ENCODE measurements at regions of chr4 and their contacts with region 1.

Region 1: DNA sequence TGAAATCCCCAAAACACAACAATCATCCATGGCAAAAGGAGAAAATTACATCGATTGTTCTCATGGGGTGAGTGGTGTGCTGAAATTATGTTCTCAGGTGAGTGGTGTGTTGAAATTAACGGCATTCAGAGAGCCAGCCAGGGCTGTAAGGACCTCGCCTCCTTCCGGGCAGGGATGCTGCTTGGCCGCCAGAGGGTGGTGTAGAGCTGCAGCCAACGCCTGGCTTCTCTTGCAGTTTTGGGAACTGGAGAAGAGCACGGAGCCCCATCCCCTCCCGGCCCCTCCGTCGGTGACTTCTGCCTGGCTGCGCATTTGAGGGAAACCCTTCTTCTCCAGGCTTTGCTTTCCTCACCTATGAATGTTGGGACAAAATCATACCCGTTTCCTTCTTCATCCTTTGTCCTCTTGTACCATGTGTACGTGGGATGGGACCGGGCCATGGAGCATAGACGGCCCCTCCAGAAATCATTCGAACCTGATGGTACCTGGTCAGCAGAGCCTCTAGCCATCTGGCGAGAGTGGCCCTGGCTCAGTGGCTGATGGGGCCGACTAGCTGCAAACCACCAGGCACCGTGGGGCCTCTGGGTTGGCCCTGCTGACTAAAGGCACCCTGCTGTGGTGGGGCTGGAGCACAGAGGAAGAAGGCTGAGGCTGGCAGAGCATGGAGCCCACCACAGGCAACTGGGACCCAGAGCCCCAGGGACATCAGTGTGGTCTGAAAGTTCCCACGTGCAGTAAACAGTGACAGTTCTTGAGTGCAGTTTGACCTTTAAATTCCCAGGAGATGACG is 28.4 kb downstream of the TRMT44 start:
- DNase-seq: peak; percentile 41 to 84 (median 68)
- ATAC-seq: peak; percentile 68 to 87 (median 86)
- H3K4me3 ChIP-seq: no peak overlapping the region
- H3K27ac ChIP-seq: no peak overlapping the region
- H3K4me1 ChIP-seq: no peaks in the 10 kb centered on the region
- H3K27me3 ChIP-seq: no peaks in the 10 kb centered on the region
- CTCF ChIP-seq: peak; percentile 78 to 84 (median 81)

Region 2: GRCh38 chr4:8540072-8540471 is 71.1 kb after region 1 on chr4:
- intact Hi-C with region 1: loop called in 2 of 3 experiments (anchors 5 kb)
- DNase-seq: peak in 1 of 6 donors; percentile 44
- ATAC-seq: no peak
- H3K4me3 ChIP-seq: no peak overlapping the region
- H3K27ac ChIP-seq: no peak overlapping the region
- H3K4me1 ChIP-seq: peaks cover 1 to 27% (median 4%) of the 10 kb centered on the region in 3 donors
- H3K27me3 ChIP-seq: no peaks in the 10 kb centered on the region
- CTCF ChIP-seq: no peak

Region 3: DNA sequence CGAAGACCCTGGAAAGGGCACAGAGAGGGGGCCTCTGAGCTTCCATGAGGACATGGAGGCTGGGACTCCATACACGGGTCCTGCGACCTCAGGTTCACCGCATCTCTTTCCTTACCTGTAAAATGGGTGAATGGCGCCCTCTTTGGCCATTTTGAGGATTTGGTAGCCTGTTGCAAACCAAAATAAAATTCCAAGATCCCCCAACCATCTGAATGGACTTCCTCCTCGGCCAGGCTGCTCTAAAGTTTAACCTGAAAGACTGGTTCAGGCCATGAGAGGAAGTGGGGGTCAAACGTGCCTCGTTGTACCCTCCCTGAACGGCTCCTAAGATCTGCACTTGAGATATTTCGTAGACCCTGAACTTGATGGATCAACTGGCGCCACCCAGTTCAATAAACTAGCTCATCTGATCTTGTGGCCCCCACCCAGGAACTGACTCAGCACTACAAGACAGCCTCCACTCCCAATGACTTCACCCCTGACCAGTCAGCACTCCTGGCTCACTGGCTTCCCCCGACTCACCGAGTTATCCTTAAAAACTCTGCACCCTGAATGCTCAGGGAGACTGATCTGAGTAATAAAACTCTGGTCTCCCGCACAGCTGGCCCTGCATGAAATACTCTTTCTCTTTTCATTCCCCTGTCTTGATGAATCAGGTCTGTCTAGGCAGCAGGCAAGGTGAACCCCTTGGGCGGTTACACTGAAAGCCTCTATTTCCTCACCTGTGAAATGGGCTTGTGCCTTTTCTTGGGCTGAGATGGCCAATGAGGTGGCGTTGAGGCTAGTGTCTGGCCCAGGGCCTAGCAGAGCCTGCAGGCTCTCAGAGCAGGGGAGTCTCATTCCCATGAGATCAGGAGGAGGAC is 78.4 kb after region 1 on chr4:
- intact Hi-C with region 1: loop called in 2 of 3 experiments (anchors 5 kb)
- DNase-seq: no peak
- ATAC-seq: peak in 3 of 4 donors; percentile 73 to 85 (median 74)
- H3K4me3 ChIP-seq: no peak overlapping the region
- H3K27ac ChIP-seq: no peak overlapping the region
- H3K4me1 ChIP-seq: no peaks in the 10 kb centered on the region
- H3K27me3 ChIP-seq: no peaks in the 10 kb centered on the region
- CTCF ChIP-seq: peak; percentile 25 to 40 (median 32)

Region 4: DNA sequence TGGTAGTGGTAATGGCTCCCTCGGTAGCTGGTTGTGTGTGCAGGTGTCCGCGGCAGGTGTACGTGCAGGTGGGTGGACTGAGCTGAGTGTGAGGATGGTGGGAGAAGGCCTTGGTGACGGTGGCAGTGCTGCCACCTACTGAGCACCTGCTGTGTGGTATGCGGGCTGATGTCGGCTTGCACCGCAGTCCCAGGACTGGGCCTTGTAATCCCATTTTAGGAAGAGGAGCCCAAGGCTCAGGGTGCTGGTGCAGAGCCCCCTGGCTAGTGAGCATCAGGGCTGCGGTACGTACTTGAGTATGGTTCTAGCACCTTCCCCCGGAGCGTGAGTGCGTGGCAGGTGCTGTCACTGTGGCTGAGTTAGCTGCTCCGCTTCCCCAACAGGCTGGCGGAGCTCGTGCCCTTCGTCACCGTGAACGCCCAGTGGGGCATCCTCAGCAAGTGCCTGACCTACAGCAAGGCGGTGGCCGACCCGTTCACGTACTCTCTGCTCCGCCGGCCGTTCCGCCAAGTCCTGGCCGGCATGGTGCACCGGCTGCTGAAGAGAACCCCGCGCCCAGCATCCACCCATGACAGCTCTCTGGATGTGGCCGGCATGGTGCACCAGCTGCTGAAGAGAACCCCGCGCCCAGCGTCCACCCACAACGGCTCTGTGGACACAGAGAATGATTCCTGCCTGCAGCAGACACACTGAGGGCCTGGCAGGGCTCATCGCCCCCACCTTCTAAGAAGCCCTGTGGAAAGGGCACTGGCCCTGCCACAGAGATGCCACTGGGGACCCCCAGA is 117.9 kb after region 1 on chr4:
- intact Hi-C with region 1: loop called in 2 of 3 experiments (anchors 5 to 10 kb)
- DNase-seq: peak in 1 of 6 donors; percentile 52
- ATAC-seq: peak in 1 of 4 donors; percentile 39
- H3K4me3 ChIP-seq: no peak overlapping the region
- H3K27ac ChIP-seq: no peak overlapping the region
- H3K4me1 ChIP-seq: no peaks in the 10 kb centered on the region
- H3K27me3 ChIP-seq: peaks cover 0 to 4% (median 0%) of the 10 kb centered on the region in 4 donors
- CTCF ChIP-seq: no peak

Region 5: DNA sequence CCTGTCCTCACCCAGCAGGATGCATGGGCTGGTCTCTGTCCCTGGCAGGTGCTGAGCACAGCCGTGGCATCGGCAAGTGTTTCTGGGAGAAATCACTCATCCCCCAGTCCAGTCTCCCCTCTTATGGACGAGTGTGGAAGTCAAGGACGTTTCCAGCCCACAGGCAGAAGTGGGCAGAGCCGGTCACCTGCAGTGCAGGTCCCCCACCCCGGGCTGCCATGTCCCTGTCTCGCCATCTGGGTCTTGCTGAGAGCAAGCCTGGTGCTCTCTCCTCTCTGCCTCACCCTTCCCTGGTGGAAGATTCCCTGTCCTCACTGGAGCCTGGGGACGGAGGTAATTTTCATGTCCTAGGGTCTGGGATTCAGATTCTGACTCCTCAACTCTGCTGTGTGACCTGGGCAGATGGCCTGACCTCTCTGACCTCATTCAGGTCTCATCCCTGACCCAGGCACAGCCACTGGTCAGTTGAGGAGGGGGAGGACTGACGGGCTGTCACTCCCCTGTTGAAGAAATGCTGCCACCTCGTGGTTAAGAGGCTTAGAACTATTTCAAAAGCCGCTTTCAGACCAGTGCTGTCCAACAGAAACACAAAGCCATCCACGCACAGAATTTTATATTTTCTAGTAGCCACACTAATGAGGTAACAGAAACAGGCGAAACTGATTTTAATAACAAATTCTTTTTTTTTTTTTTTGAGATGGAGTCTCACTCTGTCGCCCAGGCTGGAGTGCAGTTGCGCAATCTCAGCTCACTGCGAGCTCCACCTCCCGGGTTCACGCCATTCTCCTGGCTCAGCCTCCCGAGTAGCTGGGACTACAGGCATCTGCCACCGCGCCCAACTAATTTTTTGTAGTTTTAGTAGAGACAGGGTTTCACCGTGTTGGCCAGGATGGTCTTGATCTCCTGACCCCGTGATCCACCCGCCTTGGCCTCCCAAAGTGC is 125.4 kb after region 1 on chr4:
- intact Hi-C with region 1: loop called in 2 of 3 experiments (anchors 5 to 10 kb)
- DNase-seq: peak in 4 of 6 donors; percentile 34 to 58 (median 44)
- ATAC-seq: peak; percentile 60 to 88 (median 80)
- H3K4me3 ChIP-seq: no peak overlapping the region
- H3K27ac ChIP-seq: no peak overlapping the region
- H3K4me1 ChIP-seq: no peaks in the 10 kb centered on the region
- H3K27me3 ChIP-seq: peaks cover 0 to 17% (median 0%) of the 10 kb centered on the region in 4 donors
- CTCF ChIP-seq: peak in 3 of 4 donors; percentile 37 to 49 (median 48)